ENCODE measurements at regions of chr9 and their contacts with region 1.

Region 1: GRCh38 chr9:27888661-27889295 is 315.5 kb upstream of the C9orf72 start:
- DNase-seq: peak; percentile 7
- ATAC-seq: peak; percentile 72
- H3K4me3 ChIP-seq: no peak overlapping the region
- H3K27ac ChIP-seq: no peak overlapping the region
- H3K4me1 ChIP-seq: no peaks in the 10 kb centered on the region
- H3K27me3 ChIP-seq: no peaks in the 10 kb centered on the region
- CTCF ChIP-seq: peak in 2 of 3 experiments; percentile 76 to 87; a peak in 4 of 6 replicates
- POLR2A ChIP-seq: no peak
- RAD21 ChIP-seq: no peak

Region 2: GRCh38 chr9:27800159-27800558 is 88.6 kb before region 1 on chr9:
- CTCF ChIA-PET with region 1: no interaction called
- POLR2A ChIA-PET with region 1: no interaction called
- RAD21 ChIA-PET with region 1: no interaction called
- intact Hi-C with region 1: loop called (anchors 10 kb)
- DNase-seq: no peak
- ATAC-seq: no peak
- H3K4me3 ChIP-seq: no peak overlapping the region
- H3K27ac ChIP-seq: no peak overlapping the region
- H3K4me1 ChIP-seq: no peaks in the 10 kb centered on the region
- H3K27me3 ChIP-seq: no peaks in the 10 kb centered on the region
- CTCF ChIP-seq: no peak
- POLR2A ChIP-seq: no peak
- RAD21 ChIP-seq: no peak

Region 3: GRCh38 chr9:27847818-27848217 is 41.0 kb before region 1 on chr9:
- CTCF ChIA-PET with region 1: no interaction called
- POLR2A ChIA-PET with region 1: no interaction called
- RAD21 ChIA-PET with region 1: no interaction called
- intact Hi-C with region 1: loop called (anchors 10 kb)
- DNase-seq: no peak
- ATAC-seq: no peak
- H3K4me3 ChIP-seq: no peak overlapping the region
- H3K27ac ChIP-seq: no peak overlapping the region
- H3K4me1 ChIP-seq: no peaks in the 10 kb centered on the region
- H3K27me3 ChIP-seq: 0 out of 2 replicates have a peak, but pooled peaks cover 6% of the 10 kb centered on the region
- CTCF ChIP-seq: no peak
- POLR2A ChIP-seq: no peak
- RAD21 ChIP-seq: no peak

Region 4: DNA sequence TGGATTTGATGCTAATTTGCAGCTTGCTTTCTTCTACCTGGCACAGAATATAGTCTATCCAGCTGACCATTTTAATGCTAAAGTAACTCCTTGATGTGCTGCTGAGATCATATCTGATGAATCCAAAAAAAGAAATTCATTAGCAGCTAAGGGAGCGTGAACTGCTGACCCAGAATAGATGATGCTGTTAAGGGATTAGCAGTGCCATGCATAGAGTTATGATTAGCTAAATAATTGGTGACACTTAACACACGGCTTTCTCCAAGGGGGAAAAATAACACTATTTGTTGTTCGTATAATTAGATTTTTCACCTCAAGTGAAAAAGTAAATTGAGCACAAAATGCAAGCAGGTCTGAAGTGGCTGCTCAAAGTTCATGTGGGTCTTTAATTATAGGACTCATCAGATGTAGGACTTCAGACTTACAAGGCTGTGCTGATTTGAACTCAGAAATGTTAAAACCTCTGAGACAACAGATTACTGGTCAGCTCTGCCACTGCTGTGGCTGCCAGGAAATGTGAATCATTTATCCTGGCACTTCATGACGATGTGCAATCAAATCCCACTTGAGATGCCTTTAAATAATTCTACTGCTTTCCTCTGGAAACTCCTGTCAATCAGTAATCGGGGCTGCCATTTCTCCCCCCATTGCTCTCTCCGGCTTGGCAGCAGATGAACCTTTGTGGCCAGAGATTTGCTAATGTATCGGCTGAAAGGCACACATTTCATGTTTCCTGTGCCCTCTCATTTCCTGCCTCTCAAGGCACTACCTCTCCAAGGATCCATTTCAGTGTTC is 23.9 kb before region 1 on chr9:
- CTCF ChIA-PET with region 1: no interaction called
- POLR2A ChIA-PET with region 1: no interaction called
- RAD21 ChIA-PET with region 1: no interaction called
- intact Hi-C with region 1: no loop called
- DNase-seq: no peak
- ATAC-seq: no peak
- H3K4me3 ChIP-seq: no peak overlapping the region
- H3K27ac ChIP-seq: no peak overlapping the region
- H3K4me1 ChIP-seq: no peaks in the 10 kb centered on the region
- H3K27me3 ChIP-seq: no peaks in the 10 kb centered on the region
- CTCF ChIP-seq: no peak
- POLR2A ChIP-seq: no peak
- RAD21 ChIP-seq: no peak

Region 5: GRCh38 chr9:28332648-28333047 is 443.9 kb after region 1 on chr9:
- CTCF ChIA-PET with region 1: no interaction called
- POLR2A ChIA-PET with region 1: no interaction called
- RAD21 ChIA-PET with region 1: no interaction called
- intact Hi-C with region 1: no loop called
- DNase-seq: no peak
- ATAC-seq: no peak
- H3K4me3 ChIP-seq: no peak overlapping the region
- H3K27ac ChIP-seq: no peak overlapping the region
- H3K4me1 ChIP-seq: no peaks in the 10 kb centered on the region
- H3K27me3 ChIP-seq: no peaks in the 10 kb centered on the region
- CTCF ChIP-seq: no peak
- POLR2A ChIP-seq: no peak
- RAD21 ChIP-seq: no peak

Region 6: DNA sequence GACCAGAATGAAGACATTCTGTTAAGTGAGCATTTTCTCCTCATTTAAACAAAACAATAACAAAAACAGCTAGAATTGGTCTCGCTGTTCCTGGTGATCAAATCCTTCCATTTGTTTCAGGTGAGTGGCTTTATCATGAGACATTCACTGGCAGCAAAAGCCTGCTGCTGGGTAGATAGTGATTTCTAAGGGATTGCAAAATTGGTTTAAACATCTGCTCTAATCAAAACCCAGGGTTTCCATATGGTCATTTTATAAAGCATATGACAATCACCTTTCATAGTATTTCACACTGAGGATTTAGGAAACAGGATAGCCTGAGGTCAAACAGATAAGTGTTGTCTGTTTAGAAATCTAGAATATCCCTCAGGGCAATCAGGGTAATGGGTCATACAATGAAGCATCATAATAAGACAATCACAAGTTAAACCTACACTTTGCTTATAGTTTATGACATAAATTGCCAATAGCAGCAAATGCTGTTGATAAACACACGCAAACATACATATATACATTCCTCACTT is 454.1 kb after region 1 on chr9:
- CTCF ChIA-PET with region 1: no interaction called
- POLR2A ChIA-PET with region 1: no interaction called
- RAD21 ChIA-PET with region 1: no interaction called
- intact Hi-C with region 1: no loop called
- DNase-seq: no peak
- ATAC-seq: no peak
- H3K4me3 ChIP-seq: no peak overlapping the region
- H3K27ac ChIP-seq: no peak overlapping the region
- H3K4me1 ChIP-seq: no peaks in the 10 kb centered on the region
- H3K27me3 ChIP-seq: no peaks in the 10 kb centered on the region
- CTCF ChIP-seq: no peak
- POLR2A ChIP-seq: no peak
- RAD21 ChIP-seq: no peak